HEK293T (cell line): ENCODE measurements at regions of chr6 and their contacts with region 1.

Region 1: GRCh38 chr6:151390276-151391032 is 905 bp downstream of the ZBTB2 start:
- DNase-seq: peak; percentile 96

Region 2: GRCh38 chr6:151379933-151380847 is 10.3 kb before region 1 on chr6:
- CTCF ChIA-PET with region 1: no interaction called
- POLR2A ChIA-PET with region 1: interaction called, 14 read pairs
- DNase-seq: no peak

Region 3: GRCh38 chr6:151451950-151452749 is 61.7 kb after region 1 on chr6 and contains the start of gene RMND1:
- CTCF ChIA-PET with region 1: no interaction called
- POLR2A ChIA-PET with region 1: interaction called, 11 read pairs
- DNase-seq: peak; percentile 99

Region 4: DNA sequence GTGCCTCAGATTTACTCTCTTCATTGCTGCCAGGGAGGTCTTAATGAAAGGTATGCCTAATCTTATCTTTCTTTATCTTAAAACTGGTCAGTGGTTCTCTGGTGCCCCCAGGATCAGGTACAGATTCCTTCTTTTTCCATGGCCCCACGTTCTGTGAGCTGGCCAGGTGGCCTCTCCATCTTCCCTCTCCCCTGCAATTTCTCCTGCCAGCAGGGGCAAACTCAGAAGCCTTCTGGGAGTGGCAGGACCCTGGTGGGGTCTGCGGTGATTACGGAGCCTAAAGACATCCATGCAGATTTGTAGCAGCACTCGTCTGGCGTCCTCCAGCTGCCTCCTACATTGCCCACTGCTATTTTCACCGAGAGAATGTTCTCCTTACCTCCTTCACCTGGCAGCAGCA is 199.2 kb after region 1 on chr6:
- CTCF ChIA-PET with region 1: no interaction called
- POLR2A ChIA-PET with region 1: no interaction called
- DNase-seq: no peak